ENCODE measurements at regions of chr13 and their contacts with region 1.

Region 1: DNA sequence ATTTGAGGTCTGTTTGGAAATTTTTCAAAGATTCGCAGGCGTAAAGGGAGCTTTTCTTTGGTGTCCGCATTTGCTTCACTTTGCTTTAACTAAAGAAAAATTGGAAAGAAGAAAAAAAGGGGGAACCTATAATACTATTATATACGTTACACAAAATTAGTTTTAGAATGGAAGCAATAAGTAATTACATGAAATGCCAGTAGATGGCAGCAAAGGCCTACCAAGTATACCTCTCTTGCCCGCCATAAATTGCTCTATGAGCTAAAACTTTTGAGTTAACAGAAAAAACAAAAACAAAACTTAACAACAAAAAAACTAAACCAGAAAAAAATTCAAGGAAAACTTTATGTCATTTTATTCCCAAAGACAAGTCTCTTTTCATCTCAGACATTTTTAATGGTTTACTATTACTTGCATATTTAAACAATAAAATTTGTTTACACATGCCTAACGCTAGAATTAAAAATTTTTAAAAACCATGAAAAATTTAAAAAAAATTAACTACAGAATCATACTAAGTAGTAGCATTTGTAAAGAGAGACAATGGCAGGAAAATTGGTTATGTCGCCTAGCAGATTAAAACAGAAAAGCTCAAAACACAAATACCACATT is 271.4 kb downstream of the NALCN start:
- DNase-seq: peak; percentile 29
- H3K4me3 ChIP-seq: no peak overlapping the region
- H3K27ac ChIP-seq: no peak overlapping the region
- H3K27me3 ChIP-seq: peaks cover 1% of the 10 kb centered on the region
- CTCF ChIP-seq: peak; percentile 67

Region 2: DNA sequence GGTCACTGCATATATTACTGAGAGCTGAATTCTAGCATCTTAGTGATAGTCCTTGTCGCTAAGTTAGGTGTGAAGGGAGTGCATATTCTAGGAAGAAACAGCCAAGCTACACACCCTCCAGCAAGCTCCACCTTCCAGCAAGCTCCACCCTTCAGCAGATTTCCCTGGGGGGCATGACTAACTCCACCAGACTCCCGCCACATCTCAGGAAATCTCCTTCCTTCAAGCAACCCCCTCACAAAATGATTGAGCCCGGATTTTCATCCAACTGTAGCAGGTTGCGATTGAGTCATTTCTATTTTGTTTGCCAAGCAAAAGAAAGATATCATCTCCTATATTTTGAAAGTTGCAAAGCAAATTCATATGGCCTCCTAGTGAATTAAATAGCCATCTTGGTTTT is 308.2 kb before region 1 on chr13:
- CTCF ChIA-PET with region 1: no interaction called
- POLR2A ChIA-PET with region 1: no interaction called
- DNase-seq: no peak
- H3K4me3 ChIP-seq: no peak overlapping the region
- H3K27ac ChIP-seq: no peak overlapping the region
- H3K27me3 ChIP-seq: no peaks in the 10 kb centered on the region
- CTCF ChIP-seq: no peak

Region 3: GRCh38 chr13:101127741-101128353 is 17.1 kb before region 1 on chr13:
- CTCF ChIA-PET with region 1: interaction called, 17 read pairs
- POLR2A ChIA-PET with region 1: no interaction called
- DNase-seq: peak; percentile 13
- H3K4me3 ChIP-seq: no peak overlapping the region
- H3K27ac ChIP-seq: no peak overlapping the region
- H3K27me3 ChIP-seq: no peaks in the 10 kb centered on the region
- CTCF ChIP-seq: peak; percentile 82

Region 4: DNA sequence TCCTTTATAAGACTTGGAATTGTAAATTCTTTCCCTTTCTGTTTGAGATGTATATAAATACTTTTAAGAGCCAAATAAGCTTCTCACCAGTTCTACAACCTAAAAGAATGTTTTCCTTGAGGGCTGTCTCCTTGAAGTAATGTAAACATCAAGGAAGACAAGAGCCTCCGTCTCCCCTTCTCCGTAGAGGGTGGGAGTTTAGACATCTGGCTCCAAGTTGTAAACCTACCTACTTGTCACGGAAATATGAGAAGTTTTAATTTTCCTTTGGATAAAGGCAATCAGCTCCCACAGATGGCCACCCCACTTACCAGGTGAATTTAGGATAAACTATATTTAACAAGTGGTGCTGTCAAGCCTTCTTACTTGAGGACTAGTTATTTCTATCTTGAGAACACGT is 33.5 kb after region 1 on chr13:
- CTCF ChIA-PET with region 1: interaction called, 10 read pairs
- POLR2A ChIA-PET with region 1: no interaction called
- DNase-seq: peak; percentile 20
- H3K4me3 ChIP-seq: no peak overlapping the region
- H3K27ac ChIP-seq: no peak overlapping the region
- H3K27me3 ChIP-seq: no peaks in the 10 kb centered on the region
- CTCF ChIP-seq: no peak

Region 5: GRCh38 chr13:101474419-101474957 is 329.6 kb after region 1 on chr13:
- CTCF ChIA-PET with region 1: interaction called, 180 read pairs
- POLR2A ChIA-PET with region 1: interaction called, 3 read pairs
- DNase-seq: peak; percentile 90
- H3K4me3 ChIP-seq: no peak overlapping the region
- H3K27ac ChIP-seq: peak overlapping the region; percentile 11
- H3K27me3 ChIP-seq: no peaks in the 10 kb centered on the region
- CTCF ChIP-seq: peak; percentile 78

Region 6: GRCh38 chr13:101492251-101492910 is 347.5 kb after region 1 on chr13:
- CTCF ChIA-PET with region 1: interaction called, 16 read pairs
- POLR2A ChIA-PET with region 1: no interaction called
- DNase-seq: no peak
- H3K4me3 ChIP-seq: no peak overlapping the region
- H3K27ac ChIP-seq: no peak overlapping the region
- H3K27me3 ChIP-seq: no peaks in the 10 kb centered on the region
- CTCF ChIP-seq: no peak

Region 7: GRCh38 chr13:101757446-101758039 is 612.6 kb after region 1 on chr13:
- CTCF ChIA-PET with region 1: interaction called, 83 read pairs
- POLR2A ChIA-PET with region 1: no interaction called
- DNase-seq: no peak
- H3K4me3 ChIP-seq: no peak overlapping the region
- H3K27ac ChIP-seq: no peak overlapping the region
- H3K27me3 ChIP-seq: no peaks in the 10 kb centered on the region
- CTCF ChIP-seq: peak; percentile 58

Region 8: GRCh38 chr13:101919541-101920181 is 774.7 kb after region 1 on chr13:
- CTCF ChIA-PET with region 1: interaction called, 10 read pairs
- POLR2A ChIA-PET with region 1: no interaction called
- DNase-seq: no peak
- H3K4me3 ChIP-seq: no peak overlapping the region
- H3K27ac ChIP-seq: no peak overlapping the region
- H3K27me3 ChIP-seq: peaks cover 27% of the 10 kb centered on the region
- CTCF ChIP-seq: no peak